ENCODE measurements at regions of chr2 and their contacts with region 1.

Region 1: DNA sequence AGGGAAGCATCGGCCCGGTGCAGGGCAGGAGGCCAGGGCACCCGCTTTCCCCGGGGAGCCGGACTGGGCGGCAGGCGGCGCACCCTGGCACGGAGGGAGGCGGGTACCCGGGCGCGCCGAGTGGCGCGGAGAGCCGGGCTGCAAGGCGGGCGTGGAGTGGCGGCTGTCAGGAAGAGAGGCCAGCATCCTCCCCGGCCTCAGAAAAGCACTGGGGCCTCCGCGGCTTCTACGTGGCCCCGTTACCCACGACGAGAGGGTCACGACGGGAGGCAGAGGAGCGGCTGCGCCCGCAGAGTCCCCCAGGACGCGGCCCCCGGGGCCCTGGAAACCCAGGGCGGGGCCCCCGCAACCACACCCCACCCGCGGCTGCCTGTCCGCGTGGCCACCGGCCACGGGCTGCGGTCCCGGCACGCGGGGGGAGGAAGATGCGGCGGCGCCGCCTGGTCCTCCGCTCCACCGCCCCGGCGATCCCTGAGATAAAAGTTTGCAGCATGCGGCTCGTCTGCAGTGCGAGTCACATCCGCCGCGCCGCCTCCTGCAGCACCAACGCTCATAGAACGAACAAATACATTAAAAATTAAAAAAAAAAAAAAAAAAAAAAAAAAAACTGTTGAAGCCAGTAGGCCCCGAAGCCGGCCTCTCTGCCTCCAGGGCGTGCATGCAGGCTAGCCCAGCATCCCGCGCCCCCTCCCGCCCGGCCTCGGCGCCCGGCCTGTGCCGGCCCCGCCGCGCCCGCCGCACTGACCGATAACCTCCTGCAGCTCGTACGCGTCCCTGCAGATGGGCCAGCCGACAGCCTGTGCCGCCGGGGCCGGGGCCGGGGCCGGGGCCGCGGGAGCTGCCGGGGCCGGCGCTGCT is 683 bp downstream of the STK39 start:
- DNase-seq: peak; percentile 76
- H3K4me3 Mint-ChIP-seq: peak overlapping the region; percentile 95
- H3K27ac Mint-ChIP-seq: peak overlapping the region; percentile 95
- H3K4me1 Mint-ChIP-seq: peaks cover 38% of the 10 kb centered on the region
- H3K27me3 Mint-ChIP-seq: peaks cover 2% of the 10 kb centered on the region

Region 2: DNA sequence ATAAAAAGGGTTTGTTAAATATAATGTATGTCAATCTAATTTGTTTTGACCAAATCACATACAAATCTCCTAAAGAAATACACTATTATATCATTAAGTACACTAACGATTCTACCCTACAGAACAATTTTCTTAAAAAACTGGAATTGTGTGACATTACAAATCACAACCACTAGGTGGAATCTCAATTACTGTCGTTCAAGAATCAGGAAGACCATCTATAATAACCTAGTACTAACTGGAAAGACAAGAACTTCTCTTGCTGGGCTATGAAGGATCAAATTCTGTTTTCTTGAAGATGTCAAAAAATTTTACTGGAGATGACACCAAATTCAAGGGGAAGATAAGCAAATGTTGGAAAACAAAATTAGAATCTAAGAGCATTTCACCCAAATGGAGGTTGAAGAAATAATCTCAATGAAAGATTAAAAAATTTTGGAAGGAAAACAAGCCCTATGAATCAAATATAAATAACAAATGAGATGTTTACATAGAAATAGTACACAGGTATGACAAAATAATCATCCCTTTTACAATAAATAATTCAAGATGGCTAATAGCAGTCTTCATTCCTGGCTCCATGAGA is 110.2 kb before region 1 on chr2:
- intact Hi-C with region 1: loop called (anchors 1 kb)
- DNase-seq: no peak
- H3K4me3 Mint-ChIP-seq: no peak overlapping the region
- H3K27ac Mint-ChIP-seq: no peak overlapping the region
- H3K4me1 Mint-ChIP-seq: peaks cover 20% of the 10 kb centered on the region
- H3K27me3 Mint-ChIP-seq: no peaks in the 10 kb centered on the region

Region 3: GRCh38 chr2:168210895-168211570 is 35.7 kb before region 1 on chr2:
- intact Hi-C with region 1: loop called (anchors 1 kb)
- DNase-seq: no peak
- H3K4me3 Mint-ChIP-seq: peak overlapping the region; percentile 28
- H3K27ac Mint-ChIP-seq: peak overlapping the region; percentile 85
- H3K4me1 Mint-ChIP-seq: peaks cover 53% of the 10 kb centered on the region
- H3K27me3 Mint-ChIP-seq: no peaks in the 10 kb centered on the region

Region 4: DNA sequence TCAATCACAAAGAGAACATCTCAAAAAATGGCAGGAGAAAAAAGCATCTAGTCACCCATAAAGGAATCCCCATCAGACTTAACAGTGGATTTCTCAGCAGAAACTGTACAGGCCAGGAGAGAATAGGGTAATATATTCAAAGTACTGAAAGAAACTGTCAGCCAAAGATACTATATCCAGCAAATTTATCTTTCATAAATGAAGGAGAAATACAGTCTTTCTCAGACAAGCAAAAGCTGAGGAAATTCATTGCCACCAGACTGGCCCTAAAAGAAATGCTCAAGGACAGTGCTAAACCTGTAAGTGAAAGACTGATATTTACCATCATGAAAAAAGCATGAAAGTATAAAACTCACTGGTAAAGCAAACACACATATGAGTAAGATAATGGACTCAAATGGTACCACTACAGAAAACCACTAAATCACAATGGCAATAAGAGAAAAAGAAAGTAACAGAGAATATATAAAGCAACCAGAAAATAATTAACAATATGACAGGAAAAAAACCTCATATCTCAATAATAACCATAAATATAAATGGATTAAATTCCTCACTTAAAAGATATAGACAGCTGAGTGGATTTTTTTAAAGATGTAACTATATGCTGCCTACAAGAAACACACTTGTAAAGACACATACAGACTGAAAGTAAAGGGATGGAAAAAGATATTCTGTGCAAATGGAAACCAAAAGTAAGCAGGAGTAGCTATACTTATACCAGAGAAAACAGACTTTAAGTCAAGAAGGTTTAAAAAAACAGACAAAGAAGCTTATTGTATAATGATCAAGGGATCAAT is 84.1 kb after region 1 on chr2:
- intact Hi-C with region 1: loop called (anchors 2 kb)
- DNase-seq: no peak
- H3K4me3 Mint-ChIP-seq: no peak overlapping the region
- H3K27ac Mint-ChIP-seq: no peak overlapping the region
- H3K4me1 Mint-ChIP-seq: peaks cover 10% of the 10 kb centered on the region
- H3K27me3 Mint-ChIP-seq: peaks cover 2% of the 10 kb centered on the region

Region 5: DNA sequence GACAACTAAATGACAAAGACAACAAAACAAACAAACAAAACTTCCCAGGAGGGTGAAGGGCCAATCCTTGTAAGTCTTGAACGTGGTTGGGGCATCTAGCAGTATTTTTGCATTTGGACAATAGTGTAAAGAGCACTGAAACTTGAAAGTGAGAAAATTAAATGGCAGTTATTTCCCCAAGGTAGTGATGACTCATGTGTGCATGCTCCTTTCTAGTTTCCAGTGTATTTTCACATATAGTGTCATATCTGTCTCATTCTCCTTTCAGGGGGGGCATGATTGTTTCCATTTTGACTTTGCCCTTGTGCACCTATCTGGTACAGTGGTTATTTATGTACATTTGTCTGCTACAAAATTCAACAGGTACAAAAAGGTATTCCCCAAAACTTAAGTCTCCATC is 248.8 kb after region 1 on chr2:
- intact Hi-C with region 1: loop called (anchors 1 kb)
- DNase-seq: no peak
- H3K4me3 Mint-ChIP-seq: no peak overlapping the region
- H3K27ac Mint-ChIP-seq: peak overlapping the region; percentile 65
- H3K4me1 Mint-ChIP-seq: peaks cover 62% of the 10 kb centered on the region
- H3K27me3 Mint-ChIP-seq: peaks cover 3% of the 10 kb centered on the region

Region 6: GRCh38 chr2:168731616-168732015 is 484.9 kb after region 1 on chr2:
- intact Hi-C with region 1: no loop called
- DNase-seq: no peak
- H3K4me3 Mint-ChIP-seq: no peak overlapping the region
- H3K27ac Mint-ChIP-seq: no peak overlapping the region
- H3K4me1 Mint-ChIP-seq: no peaks in the 10 kb centered on the region
- H3K27me3 Mint-ChIP-seq: no peaks in the 10 kb centered on the region

Region 7: DNA sequence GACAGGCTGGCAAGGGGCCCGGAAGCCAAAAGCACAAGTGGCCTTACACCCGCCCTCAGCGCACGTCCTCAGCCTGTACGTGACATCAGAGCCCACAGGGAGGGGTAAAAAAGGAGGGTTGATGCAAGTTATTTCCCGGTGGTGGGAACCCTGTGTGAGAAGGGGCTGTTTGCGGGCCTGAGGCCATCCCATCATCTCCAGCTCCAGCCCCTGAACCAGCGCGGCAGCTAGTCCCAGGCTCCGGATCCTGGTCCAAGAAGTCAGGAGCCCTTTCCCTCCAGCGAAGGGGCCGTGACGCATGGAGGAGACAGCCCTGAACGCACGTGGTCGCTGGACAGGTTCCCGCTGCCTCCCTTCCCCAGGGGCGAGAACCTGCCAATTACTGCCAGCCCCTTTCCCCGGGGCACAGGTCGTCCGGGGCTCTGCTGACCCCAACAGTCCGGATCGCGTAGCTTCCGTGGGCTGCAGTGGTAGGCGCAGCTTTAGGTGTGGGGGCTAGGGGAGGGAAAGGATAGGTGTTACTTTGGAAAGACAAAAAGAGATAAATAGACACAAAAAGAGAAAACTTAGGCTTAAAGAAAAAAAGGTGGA is 1116.9 kb after region 1 on chr2:
- intact Hi-C with region 1: loop called (anchors 2 kb)
- DNase-seq: peak; percentile 41
- H3K4me3 Mint-ChIP-seq: peak overlapping the region; percentile 88
- H3K27ac Mint-ChIP-seq: peak overlapping the region; percentile 75
- H3K4me1 Mint-ChIP-seq: peaks cover 31% of the 10 kb centered on the region
- H3K27me3 Mint-ChIP-seq: peaks cover 46% of the 10 kb centered on the region